ENCODE measurements at regions of chr10 and their contacts with region 1.

Region 1: GRCh38 chr10:119650692-119651513 is at the start of gene BAG3:
- DNase-seq: peak; percentile 95 to 98 (median 97)
- ATAC-seq: peak; percentile 90 to 94 (median 92)
- H3K4me3 ChIP-seq: peak within 1 kb of the TSS; percentile 68 to 99 (median 82)
- H3K27ac ChIP-seq: peak within 1 kb of the TSS; percentile 91 to 99 (median 98)
- H3K4me1 ChIP-seq: peaks cover 12 to 42% (median 32%) of the 10 kb centered on the region in 12 donors
- H3K27me3 ChIP-seq: no peaks in the 10 kb centered on the region
- CTCF ChIP-seq: no peak
- POLR2A ChIP-seq: no peak
- total RNA-seq, gene BAG3: 85.1 to 219 (median 141) TPM

Region 2: GRCh38 chr10:119596537-119597404 is 54.1 kb before region 1 on chr10 and contains the start of gene TIAL1:
- intact Hi-C with region 1: loop called in 5 of 10 experiments (anchors 1 to 10 kb)
- DNase-seq: peak; percentile 97 to 99 (median 98)
- ATAC-seq: peak; percentile 94 to 97 (median 96)
- H3K4me3 ChIP-seq: peak within 1 kb of the TSS; percentile 66 to 91 (median 88)
- H3K27ac ChIP-seq: peak within 1 kb of the TSS; percentile 94 to 100 (median 99)
- H3K4me1 ChIP-seq: peaks cover 0 to 49% (median 43%) of the 10 kb centered on the region in 12 donors
- H3K27me3 ChIP-seq: no peaks in the 10 kb centered on the region
- CTCF ChIP-seq: no peak
- POLR2A ChIP-seq: peak; percentile 40 to 79
- total RNA-seq, gene TIAL1: 36.9 to 86.3 (median 67.3) TPM

Region 3: DNA sequence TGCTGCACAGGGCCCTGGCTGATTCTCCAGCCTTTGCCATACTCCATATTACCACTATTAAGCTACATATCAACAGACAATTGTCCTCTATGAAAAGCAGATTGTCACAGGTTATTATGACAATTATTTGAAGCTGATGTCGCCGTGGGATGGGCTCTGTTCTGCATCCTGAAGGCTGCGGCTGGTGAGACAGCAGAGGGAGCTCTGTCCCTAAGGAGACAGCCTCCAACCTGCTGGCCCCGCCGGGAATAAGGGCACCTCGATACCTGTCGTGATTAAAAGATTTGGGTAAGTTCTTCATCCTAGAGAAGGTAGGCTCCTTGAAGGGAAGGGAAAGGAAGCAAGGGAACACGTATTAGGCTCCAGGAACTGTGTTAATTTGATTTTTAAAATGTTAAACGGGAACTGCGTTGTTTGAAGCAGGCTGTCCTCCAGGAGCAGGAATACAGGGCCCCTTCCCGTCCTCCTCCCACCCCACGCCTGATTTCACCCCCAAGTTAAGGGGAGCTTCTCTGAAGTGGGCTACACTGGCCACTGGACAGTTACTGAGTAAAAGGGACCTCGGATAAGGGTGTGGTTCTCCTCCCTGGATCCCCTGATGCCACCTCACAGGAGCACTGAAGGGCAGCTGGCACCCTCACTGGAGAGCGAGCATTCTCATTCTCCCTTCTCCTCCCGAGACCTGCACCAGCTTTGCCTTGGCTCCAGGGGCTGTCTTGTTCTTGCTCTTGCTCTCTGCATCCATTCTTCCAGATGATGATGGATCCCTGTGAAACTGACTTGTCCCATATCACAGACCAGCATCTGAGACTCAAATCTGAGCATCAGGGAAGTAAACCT is 42.4 kb before region 1 on chr10:
- intact Hi-C with region 1: loop called in 2 of 10 experiments (anchors 5 kb)
- DNase-seq: peak; percentile 27 to 74 (median 46)
- ATAC-seq: peak; percentile 77 to 94 (median 86)
- H3K4me3 ChIP-seq: peak overlapping the region in 2 of 12 donors; percentile 14 to 16
- H3K27ac ChIP-seq: no peak overlapping the region
- H3K4me1 ChIP-seq: peaks cover 0 to 3% (median 0%) of the 10 kb centered on the region in 12 donors
- H3K27me3 ChIP-seq: no peaks in the 10 kb centered on the region
- CTCF ChIP-seq: peak; percentile 37 to 76 (median 63)
- POLR2A ChIP-seq: no peak

Region 4: GRCh38 chr10:119616882-119617570 is 33.9 kb before region 1 on chr10:
- intact Hi-C with region 1: loop called in 2 of 10 experiments (anchors 5 kb)
- DNase-seq: peak in 1 of 5 donors; percentile 33
- ATAC-seq: peak in 2 of 4 donors; percentile 33 to 64
- H3K4me3 ChIP-seq: no peak overlapping the region
- H3K27ac ChIP-seq: no peak overlapping the region
- H3K4me1 ChIP-seq: peaks cover 0 to 28% (median 7%) of the 10 kb centered on the region in 12 donors
- H3K27me3 ChIP-seq: no peaks in the 10 kb centered on the region
- CTCF ChIP-seq: peak in 6 of 12 donors; percentile 7 to 46 (median 24)
- POLR2A ChIP-seq: no peak

Region 5: GRCh38 chr10:119670717-119671116 is 19.8 kb after region 1 on chr10:
- intact Hi-C with region 1: loop called in 1 of 10 experiments (anchors 1 kb)
- DNase-seq: peak in 1 of 5 donors; percentile 58
- ATAC-seq: peak in 2 of 4 donors; percentile 29 to 41
- H3K4me3 ChIP-seq: no peak overlapping the region
- H3K27ac ChIP-seq: peak overlapping the region in 11 of 12 donors; percentile 9 to 94 (median 81)
- H3K4me1 ChIP-seq: peaks cover 5 to 70% (median 45%) of the 10 kb centered on the region in 12 donors
- H3K27me3 ChIP-seq: no peaks in the 10 kb centered on the region
- CTCF ChIP-seq: no peak
- POLR2A ChIP-seq: no peak

Region 6: DNA sequence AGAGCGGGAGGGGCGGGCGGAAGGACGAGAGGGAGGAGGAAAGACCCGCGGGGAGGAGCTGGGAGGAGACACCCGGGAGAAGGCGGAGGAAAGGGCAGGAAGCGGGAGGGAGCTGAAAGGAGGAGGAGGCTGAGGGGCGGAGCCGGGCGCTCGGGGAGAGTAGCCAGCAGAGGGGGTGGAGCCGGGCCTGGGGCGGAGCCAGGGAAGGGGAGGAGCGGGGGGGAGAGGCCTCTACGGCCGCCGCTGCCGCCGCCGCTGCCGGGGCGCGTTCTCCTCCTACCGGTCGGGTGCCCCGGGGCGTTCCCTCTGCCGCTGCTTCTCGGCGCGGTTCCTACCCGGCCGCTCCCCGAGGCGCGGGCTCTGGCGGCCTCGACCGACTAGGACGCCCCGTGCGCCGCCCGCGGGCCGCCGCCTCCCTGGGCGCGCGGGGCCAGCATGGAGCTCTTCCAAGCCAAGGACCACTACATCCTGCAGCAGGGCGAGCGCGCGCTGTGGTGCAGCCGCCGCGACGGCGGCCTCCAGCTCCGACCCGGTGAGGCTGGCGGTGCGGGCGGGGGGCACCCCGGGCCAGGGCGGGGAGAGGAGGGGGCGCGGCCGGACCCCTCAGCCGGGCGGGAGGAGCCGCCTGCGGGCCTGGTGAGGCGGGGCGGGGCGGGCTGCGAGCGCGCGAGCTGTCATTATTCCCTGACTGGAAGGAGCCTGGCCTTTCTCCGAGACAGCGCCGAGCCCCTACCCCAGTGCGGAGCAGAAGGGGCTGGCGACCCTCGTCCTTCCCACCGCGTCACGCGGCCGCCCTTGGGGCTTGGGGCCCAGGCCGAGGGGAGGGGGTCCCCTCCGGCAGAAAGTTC is 75.1 kb after region 1 on chr10 and contains the start of gene INPP5F:
- intact Hi-C with region 1: loop called in 1 of 10 experiments (anchors 5 kb)
- DNase-seq: peak; percentile 99 to 100 (median 100)
- ATAC-seq: peak; percentile 99 to 100 (median 99)
- H3K4me3 ChIP-seq: peak within 1 kb of the TSS; percentile 67 to 98 (median 82)
- H3K27ac ChIP-seq: peak within 1 kb of the TSS; percentile 51 to 99 (median 95)
- H3K4me1 ChIP-seq: peaks cover 0 to 39% (median 23%) of the 10 kb centered on the region in 12 donors
- H3K27me3 ChIP-seq: no peaks in the 10 kb centered on the region
- CTCF ChIP-seq: peak in 10 of 12 donors; percentile 26 to 58 (median 35)
- POLR2A ChIP-seq: peak in 1 of 2 donors; percentile 57
- total RNA-seq, gene INPP5F: 3.9 to 9.9 (median 6.6) TPM

Region 7: GRCh38 chr10:119872860-119873681 is 222.2 kb after region 1 on chr10:
- intact Hi-C with region 1: loop called in 1 of 10 experiments (anchors 5 kb)
- DNase-seq: peak; percentile 90 to 96 (median 93)
- ATAC-seq: peak; percentile 93 to 98 (median 98)
- H3K4me3 ChIP-seq: peak overlapping the region; percentile 70 to 95 (median 82)
- H3K27ac ChIP-seq: peak overlapping the region; percentile 80 to 98 (median 93)
- H3K4me1 ChIP-seq: peaks cover 4 to 45% (median 20%) of the 10 kb centered on the region in 12 donors
- H3K27me3 ChIP-seq: no peaks in the 10 kb centered on the region
- CTCF ChIP-seq: peak in 1 of 12 donors; percentile 3
- POLR2A ChIP-seq: peak in 1 of 2 donors; percentile 71

Measured in heart left ventricle (tissue), 16 donors.